ENCODE measurements at regions of chr19 and their contacts with region 1.

Region 1: DNA sequence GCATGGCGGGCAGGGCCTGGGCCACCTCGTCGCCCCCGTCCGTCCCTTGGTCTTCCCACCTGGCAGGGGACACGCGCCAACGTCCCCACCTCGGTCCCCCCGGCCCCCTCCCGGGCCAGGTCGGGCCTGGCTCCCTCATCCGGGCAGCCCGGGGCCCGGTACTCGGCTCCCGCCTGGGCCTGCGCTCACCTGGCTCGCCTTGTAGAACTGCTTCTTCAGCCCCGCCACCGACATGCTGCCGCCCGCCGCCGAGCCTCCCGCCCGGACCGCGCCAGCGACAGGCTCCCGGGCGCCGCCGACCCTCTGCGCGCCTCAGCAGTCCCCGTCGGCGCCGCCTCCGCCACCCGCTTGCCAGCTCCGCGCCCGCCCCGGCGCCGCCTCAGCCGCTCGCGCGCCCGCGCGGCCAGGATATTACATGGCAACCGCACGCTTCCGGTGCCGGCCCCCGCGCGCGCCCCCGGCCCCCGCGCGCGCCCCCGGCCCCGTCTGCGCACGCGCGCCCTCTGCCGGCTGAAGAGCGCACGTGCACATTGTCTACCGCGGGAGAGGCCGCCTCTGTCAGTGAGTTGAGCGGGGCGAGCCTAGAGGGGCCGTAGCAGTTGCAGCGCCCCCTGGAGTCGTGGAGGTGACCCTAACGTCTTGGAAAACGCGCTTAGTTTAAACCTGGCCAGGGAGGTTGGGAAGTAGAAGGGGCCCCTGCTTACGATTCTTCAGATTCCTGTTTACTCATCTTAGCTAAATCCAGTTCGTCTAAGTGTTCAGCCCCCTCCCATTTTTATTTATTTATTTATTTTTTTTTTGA is at the start of gene SH3GL1:
- DNase-seq: peak; percentile 94
- H3K4me3 Mint-ChIP-seq: peak within 1 kb of the TSS; percentile 82
- H3K27ac Mint-ChIP-seq: peak within 1 kb of the TSS; percentile 86
- H3K4me1 Mint-ChIP-seq: peaks cover 60% of the 10 kb centered on the region
- H3K27me3 Mint-ChIP-seq: no peaks in the 10 kb centered on the region
- total RNA-seq, gene SH3GL1: 38.1 to 42.0 TPM

Region 2: GRCh38 chr19:4065430-4066175 is 334.7 kb before region 1 on chr19:
- CTCF ChIA-PET with region 1: no interaction called
- POLR2A ChIA-PET with region 1: no interaction called
- intact Hi-C with region 1: loop called (anchors 5 kb)
- DNase-seq: peak; percentile 97
- H3K4me3 Mint-ChIP-seq: peak overlapping the region; percentile 57
- H3K27ac Mint-ChIP-seq: no peak overlapping the region
- H3K4me1 Mint-ChIP-seq: peaks cover 41% of the 10 kb centered on the region
- H3K27me3 Mint-ChIP-seq: no peaks in the 10 kb centered on the region

Region 3: DNA sequence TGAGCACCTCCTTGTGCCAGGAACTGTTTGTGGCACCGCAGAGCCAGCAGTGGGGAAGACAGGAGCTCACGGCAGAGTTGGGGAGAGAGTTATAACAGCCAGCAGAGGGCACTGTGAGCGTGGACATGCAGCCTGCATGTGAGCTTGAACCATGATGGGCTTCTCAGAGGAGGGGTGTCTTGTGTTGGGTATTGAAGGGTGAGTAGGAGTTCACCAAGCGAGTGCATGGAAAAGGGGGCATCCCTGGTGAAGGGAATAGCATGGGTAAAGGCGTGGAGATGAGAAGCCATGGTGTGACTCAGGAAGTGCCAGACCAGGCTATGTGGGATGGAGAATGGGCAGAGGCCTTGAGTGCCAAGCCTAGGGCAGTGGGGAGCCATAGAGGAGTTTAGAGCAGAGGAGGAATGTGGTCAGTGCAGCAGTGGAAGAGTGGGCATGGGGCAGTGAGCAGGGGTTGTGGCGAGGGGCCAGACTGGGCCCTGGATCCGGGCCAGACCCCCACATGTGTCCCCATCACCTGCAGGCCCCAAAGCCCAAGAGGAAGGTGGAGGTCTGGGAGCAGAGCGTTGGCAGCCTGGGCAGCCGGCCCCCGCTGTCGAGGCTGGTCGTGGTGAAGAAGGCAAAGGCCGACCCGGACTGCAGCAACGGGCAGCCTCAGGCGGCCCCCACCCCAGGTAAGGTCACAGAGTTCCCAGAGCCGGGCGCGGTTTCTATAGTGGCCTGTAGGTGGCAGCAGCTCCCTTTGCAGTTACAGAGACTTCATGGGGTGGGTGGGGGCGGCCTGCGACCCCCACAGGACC is 133.0 kb before region 1 on chr19:
- CTCF ChIA-PET with region 1: interaction called, 15 read pairs
- POLR2A ChIA-PET with region 1: no interaction called
- intact Hi-C with region 1: loop called (anchors 1 kb)
- DNase-seq: peak; percentile 68
- H3K4me3 Mint-ChIP-seq: no peak overlapping the region
- H3K27ac Mint-ChIP-seq: no peak overlapping the region
- H3K4me1 Mint-ChIP-seq: peaks cover 7% of the 10 kb centered on the region
- H3K27me3 Mint-ChIP-seq: no peaks in the 10 kb centered on the region

Region 4: GRCh38 chr19:4304530-4305252 is 95.6 kb before region 1 on chr19 and contains the start of gene FSD1:
- CTCF ChIA-PET with region 1: no interaction called
- POLR2A ChIA-PET with region 1: no interaction called
- intact Hi-C with region 1: no loop called
- DNase-seq: peak; percentile 81
- H3K4me3 Mint-ChIP-seq: peak within 1 kb of the TSS; percentile 50
- H3K27ac Mint-ChIP-seq: no peak within 1 kb of the TSS
- H3K4me1 Mint-ChIP-seq: peaks cover 28% of the 10 kb centered on the region
- H3K27me3 Mint-ChIP-seq: no peaks in the 10 kb centered on the region
- total RNA-seq, gene FSD1: 7.8 to 8.1 TPM

Region 5: GRCh38 chr19:4342615-4343369 is 57.5 kb before region 1 on chr19:
- CTCF ChIA-PET with region 1: interaction called, 15 read pairs
- POLR2A ChIA-PET with region 1: interaction called, 13 read pairs
- intact Hi-C with region 1: loop called (anchors 1 kb)
- DNase-seq: peak; percentile 96
- H3K4me3 Mint-ChIP-seq: peak overlapping the region; percentile 89
- H3K27ac Mint-ChIP-seq: peak overlapping the region; percentile 88
- H3K4me1 Mint-ChIP-seq: peaks cover 24% of the 10 kb centered on the region
- H3K27me3 Mint-ChIP-seq: no peaks in the 10 kb centered on the region

Region 6: DNA sequence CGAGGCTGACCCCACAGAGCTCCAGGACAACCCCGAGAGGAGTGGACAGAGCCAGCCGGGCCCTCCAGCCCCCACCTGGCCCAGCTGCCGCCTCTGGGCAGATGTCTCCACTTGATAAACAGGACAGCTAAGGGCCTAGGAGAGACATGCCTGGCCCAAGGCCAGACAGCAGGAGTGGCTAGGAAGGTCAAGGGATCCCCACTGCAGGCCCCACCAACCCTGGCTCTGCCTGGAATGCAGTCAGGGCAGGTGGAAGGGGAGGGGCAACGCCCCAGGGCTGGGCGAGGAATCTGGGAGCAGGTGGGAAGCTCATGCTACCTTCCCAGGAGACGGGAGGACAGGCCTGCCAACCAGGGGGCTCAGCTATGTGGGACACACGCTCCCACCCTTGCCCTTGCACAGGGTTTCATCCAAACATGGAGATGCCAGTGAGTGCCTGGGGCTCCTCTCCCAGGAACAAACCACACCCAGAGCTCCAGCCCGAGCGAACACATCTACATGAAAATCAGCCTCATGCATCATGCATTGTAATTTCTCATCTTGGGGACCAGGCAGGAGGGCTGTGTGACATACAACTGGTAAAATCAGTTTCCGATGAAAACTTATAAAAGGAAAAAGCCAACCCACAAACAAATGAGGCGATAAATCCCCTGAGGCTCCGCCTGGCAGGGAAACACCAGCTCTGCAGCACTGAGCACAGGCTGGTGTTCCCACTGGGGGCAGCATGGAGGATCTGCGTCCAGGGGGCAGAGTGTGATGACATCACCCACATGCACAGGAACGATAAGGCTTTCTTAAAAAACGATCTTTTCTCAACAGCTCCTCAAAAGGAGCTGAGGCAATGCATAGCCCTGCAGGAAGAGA is 24.9 kb before region 1 on chr19:
- CTCF ChIA-PET with region 1: interaction called, 52 read pairs
- POLR2A ChIA-PET with region 1: interaction called, 23 read pairs
- intact Hi-C with region 1: loop called (anchors 1 kb)
- DNase-seq: no peak
- H3K4me3 Mint-ChIP-seq: no peak overlapping the region
- H3K27ac Mint-ChIP-seq: peak overlapping the region; percentile 25
- H3K4me1 Mint-ChIP-seq: peaks cover 66% of the 10 kb centered on the region
- H3K27me3 Mint-ChIP-seq: no peaks in the 10 kb centered on the region

Region 7: DNA sequence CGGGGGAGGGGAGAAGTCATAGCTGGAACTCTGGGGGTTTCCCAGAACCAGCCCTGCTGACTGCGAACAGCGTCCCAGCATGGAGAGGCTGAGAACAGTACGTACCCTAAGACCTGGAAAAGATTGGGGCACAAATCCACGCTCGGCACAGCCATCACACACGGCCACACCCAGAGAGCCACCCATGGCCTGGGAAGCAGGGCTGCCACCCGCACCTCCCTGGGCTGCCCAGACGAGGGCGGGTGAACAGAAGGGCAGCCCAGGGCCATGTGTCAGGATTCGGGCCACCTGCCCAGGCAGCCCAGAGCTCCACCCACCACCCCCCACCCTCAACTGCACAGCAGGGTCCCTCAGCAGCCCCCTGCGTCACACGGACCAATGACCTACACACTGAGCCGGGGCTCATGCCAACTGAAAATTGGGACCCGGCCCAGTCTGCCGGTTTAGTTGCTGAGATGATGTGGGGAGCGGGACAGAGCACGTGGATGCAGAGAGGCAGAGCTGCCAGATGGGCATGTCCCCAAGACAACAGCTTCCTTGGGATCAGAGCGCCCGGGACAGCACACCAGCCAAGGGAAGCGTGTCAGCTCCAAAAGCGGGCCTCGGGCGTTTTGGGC is 48.8 kb after region 1 on chr19:
- CTCF ChIA-PET with region 1: no interaction called
- POLR2A ChIA-PET with region 1: no interaction called
- intact Hi-C with region 1: no loop called
- DNase-seq: no peak
- H3K4me3 Mint-ChIP-seq: no peak overlapping the region
- H3K27ac Mint-ChIP-seq: no peak overlapping the region
- H3K4me1 Mint-ChIP-seq: no peaks in the 10 kb centered on the region
- H3K27me3 Mint-ChIP-seq: no peaks in the 10 kb centered on the region

Region 8: GRCh38 chr19:4471403-4472173 is 71.3 kb after region 1 on chr19:
- CTCF ChIA-PET with region 1: interaction called, 12 read pairs
- POLR2A ChIA-PET with region 1: interaction called, 3 read pairs
- intact Hi-C with region 1: loop called (anchors 1 kb)
- DNase-seq: peak; percentile 99
- H3K4me3 Mint-ChIP-seq: no peak overlapping the region
- H3K27ac Mint-ChIP-seq: no peak overlapping the region
- H3K4me1 Mint-ChIP-seq: peaks cover 21% of the 10 kb centered on the region
- H3K27me3 Mint-ChIP-seq: no peaks in the 10 kb centered on the region

Measured in activated CD4-positive, alpha-beta memory T cell treated with anti-CD3 and anti-CD28 coated beads for 36 hours (primary cell).